PC-3 (cell line): ENCODE measurements at regions of chr5 and their contacts with region 1.

Region 1: DNA sequence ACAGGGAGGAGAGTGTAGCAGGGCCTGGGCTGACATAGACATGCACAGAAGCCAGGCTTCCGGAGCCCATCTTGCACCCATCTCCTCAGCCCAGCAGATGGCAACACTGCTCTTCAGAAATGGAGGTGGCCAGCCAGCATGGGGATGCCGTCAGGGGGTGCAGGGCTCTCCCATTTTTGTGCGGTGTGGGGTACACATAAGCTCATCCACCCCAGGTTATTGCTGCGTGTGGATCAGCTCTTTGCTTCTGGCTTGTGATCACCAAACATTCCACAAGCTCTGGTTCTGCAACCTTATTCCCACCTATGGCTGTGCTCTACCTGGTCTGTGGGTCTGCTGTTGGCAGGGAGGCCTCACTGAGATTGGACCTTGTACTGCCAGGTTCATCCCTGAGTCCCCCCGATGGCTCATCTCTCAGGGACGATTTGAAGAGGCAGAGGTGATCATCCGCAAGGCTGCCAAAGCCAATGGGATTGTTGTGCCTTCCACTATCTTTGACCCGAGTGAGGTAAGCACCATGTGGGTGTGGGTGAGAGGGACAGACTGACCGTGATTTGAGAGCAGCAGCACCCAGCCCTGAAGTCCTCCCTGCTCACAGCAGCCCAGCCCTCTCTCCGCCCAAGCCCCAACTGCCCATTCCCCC is 17.3 kb downstream of the SLC22A5 start:
- DNase-seq: peak; percentile 66
- ATAC-seq: peak; percentile 25
- H3K4me3 ChIP-seq: no peak overlapping the region
- H3K27ac ChIP-seq: peak overlapping the region; percentile 99
- H3K4me1 ChIP-seq: peaks cover 52% of the 10 kb centered on the region
- H3K27me3 ChIP-seq: no peaks in the 10 kb centered on the region
- CTCF ChIP-seq: peak; percentile 79

Region 2: GRCh38 chr5:132162945-132163344 is 223.8 kb before region 1 on chr5:
- CTCF ChIA-PET with region 1: no interaction called
- POLR2A ChIA-PET with region 1: no interaction called
- intact Hi-C with region 1: no loop called
- DNase-seq: no peak
- ATAC-seq: no peak
- H3K4me3 ChIP-seq: no peak overlapping the region
- H3K27ac ChIP-seq: no peak overlapping the region
- H3K4me1 ChIP-seq: no peaks in the 10 kb centered on the region; the same call in 1 of the 2 replicates
- H3K27me3 ChIP-seq: no peaks in the 10 kb centered on the region
- CTCF ChIP-seq: no peak

Region 3: DNA sequence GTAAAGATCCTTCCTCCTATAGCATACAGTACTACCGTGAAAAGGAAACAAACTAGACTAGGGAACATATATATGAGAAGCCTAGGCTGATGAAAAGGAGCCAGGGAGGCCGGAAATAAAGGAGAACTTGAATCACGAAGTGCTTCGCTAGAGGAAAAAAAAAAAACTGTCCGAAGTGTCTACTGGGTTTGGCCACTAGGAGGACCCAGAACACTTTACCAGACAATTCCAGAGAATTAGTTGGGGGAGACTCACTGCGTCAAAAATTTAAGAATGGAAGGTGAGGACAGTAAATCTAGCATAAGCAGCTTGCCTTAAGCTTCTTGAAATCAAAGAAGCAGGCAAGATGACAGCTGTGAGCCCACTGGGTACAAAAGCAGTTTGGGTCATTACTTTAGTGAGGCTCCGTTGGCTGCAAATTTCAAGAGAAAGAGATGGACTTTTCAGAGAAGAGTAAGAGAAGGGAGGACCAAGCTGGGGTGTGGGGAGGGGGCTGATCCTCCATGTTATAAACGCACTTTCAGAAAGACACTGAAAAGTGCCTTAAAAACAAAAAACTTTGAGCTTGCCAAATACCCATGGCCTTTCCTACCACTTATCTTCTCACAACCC is 206.5 kb before region 1 on chr5:
- CTCF ChIA-PET with region 1: no interaction called
- POLR2A ChIA-PET with region 1: no interaction called
- intact Hi-C with region 1: loop called (anchors 5 kb)
- DNase-seq: peak; percentile 69
- ATAC-seq: peak; percentile 48
- H3K4me3 ChIP-seq: no peak overlapping the region
- H3K27ac ChIP-seq: no peak overlapping the region
- H3K4me1 ChIP-seq: 0 out of 2 replicates have a peak, but pooled peaks cover 4% of the 10 kb centered on the region
- H3K27me3 ChIP-seq: no peaks in the 10 kb centered on the region
- CTCF ChIP-seq: peak; percentile 78

Region 4: DNA sequence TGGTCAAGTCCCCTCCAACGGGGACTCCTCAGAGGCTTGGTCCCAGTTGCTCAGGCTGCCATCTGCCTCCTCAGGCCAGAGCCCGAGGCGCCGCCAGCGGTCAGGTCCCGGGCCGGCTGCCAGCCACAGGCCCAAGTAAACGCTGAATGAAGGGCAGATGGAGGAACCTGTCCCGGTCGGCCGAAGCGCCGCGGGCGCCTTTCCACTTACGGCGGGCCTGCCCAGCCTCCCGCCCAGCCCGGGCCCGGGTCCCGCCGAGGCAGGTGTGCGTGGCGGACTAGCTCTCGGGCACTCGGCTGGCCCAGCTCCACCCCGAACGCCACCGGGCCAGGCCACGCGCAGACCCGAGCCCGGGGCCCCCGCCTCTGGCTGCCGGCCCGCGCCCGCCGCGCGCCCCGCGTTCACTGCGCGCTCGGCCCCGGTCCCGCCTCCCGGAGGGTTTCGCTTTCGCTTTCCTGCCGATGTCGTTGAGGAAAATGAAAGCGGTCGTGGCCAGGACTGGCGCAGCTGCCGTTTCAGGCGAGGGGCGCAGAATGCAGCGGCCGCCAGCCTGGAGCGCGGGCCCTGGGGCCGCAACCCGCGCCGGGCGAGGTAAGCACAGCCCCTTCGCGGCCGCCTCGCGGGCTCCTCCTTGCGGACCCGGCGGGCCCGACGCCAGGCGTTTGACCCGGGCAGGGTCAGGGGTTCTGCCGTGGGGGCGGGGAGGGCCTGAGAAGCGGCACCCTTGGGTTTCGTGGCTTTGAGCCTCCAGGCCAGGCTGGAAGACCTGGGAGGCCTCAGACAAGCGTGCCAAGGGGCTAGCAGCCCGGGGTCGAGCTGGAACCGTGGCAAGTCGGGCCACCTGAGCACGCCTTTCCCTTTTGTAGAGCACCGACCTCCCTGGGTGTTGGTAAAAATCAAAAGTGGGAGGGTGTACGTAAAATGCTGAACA is 24.0 kb after region 1 on chr5:
- CTCF ChIA-PET with region 1: no interaction called
- POLR2A ChIA-PET with region 1: interaction called, 5 read pairs
- intact Hi-C with region 1: loop called (anchors 1 kb)
- DNase-seq: peak; percentile 64
- ATAC-seq: peak; percentile 63
- H3K4me3 ChIP-seq: peak overlapping the region; percentile 71
- H3K27ac ChIP-seq: peak overlapping the region; percentile 90
- H3K4me1 ChIP-seq: peaks cover 65% of the 10 kb centered on the region
- H3K27me3 ChIP-seq: no peaks in the 10 kb centered on the region
- CTCF ChIP-seq: peak; percentile 51; the same call in 1 of the 2 replicates

Region 5: GRCh38 chr5:132495667-132496190 is 109.0 kb after region 1 on chr5:
- CTCF ChIA-PET with region 1: interaction called, 6 read pairs
- POLR2A ChIA-PET with region 1: no interaction called
- intact Hi-C with region 1: loop called (anchors 2 kb)
- DNase-seq: peak; percentile 72
- ATAC-seq: peak; percentile 39
- H3K4me3 ChIP-seq: peak overlapping the region; percentile 85
- H3K27ac ChIP-seq: peak overlapping the region; percentile 84
- H3K4me1 ChIP-seq: peaks cover 51% of the 10 kb centered on the region
- H3K27me3 ChIP-seq: no peaks in the 10 kb centered on the region
- CTCF ChIP-seq: no peak

Region 6: DNA sequence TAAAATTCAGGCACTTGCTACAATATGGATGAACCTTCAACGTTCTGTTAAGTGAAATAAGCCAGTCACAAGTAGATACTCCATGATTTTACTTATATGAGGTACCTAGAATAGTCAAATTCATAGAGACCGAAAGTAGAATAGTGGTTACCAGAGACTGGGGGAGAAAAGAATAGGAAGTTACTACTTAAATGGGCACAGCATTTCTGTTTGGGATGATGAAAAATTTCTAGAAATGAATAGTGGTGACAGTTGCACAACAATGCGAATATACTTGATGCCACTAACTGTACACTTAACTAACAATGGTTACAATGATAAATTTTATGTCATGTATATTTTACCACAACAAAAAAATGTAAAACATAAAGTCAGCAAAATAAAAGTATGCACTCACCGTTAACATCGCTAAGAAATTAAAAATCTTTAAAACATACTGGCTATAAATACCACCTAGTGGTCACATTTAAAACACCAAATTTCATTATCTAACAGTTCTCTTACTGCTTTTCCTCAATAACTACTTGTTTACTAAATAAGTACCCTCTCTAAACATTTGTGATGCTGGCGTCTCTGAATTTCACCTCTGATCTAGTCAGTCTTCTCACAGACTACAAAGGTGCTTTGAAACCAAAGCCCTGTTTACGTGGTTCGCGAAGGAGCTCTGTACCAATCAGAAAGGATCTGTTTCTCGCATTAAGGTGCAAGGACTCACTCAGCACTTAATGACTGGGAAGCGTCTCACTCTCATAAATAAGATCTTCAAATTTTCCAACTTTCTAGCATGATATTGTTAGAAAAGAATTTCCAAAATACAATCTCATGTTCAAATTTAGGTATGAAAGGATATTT is 327.9 kb after region 1 on chr5:
- CTCF ChIA-PET with region 1: no interaction called
- POLR2A ChIA-PET with region 1: no interaction called
- intact Hi-C with region 1: loop called (anchors 10 kb)
- DNase-seq: peak; percentile 39
- ATAC-seq: no peak
- H3K4me3 ChIP-seq: no peak overlapping the region
- H3K27ac ChIP-seq: no peak overlapping the region
- H3K4me1 ChIP-seq: no peaks in the 10 kb centered on the region
- H3K27me3 ChIP-seq: no peaks in the 10 kb centered on the region
- CTCF ChIP-seq: peak; percentile 65